Right ventricle myocardium inferior (tissue), 1 donor: ENCODE measurements at regions of chr21 and their contacts with region 1.

Region 1: GRCh38 chr21:34888569-34889319 is 160.4 kb downstream of the RUNX1 start:
- DNase-seq: peak; percentile 98
- ATAC-seq: peak; percentile 89

Region 2: GRCh38 chr21:35204850-35205541 is 316.3 kb after region 1 on chr21:
- intact Hi-C with region 1: loop called (anchors 10 kb)
- DNase-seq: peak; percentile 86
- ATAC-seq: peak; percentile 84

Region 3: DNA sequence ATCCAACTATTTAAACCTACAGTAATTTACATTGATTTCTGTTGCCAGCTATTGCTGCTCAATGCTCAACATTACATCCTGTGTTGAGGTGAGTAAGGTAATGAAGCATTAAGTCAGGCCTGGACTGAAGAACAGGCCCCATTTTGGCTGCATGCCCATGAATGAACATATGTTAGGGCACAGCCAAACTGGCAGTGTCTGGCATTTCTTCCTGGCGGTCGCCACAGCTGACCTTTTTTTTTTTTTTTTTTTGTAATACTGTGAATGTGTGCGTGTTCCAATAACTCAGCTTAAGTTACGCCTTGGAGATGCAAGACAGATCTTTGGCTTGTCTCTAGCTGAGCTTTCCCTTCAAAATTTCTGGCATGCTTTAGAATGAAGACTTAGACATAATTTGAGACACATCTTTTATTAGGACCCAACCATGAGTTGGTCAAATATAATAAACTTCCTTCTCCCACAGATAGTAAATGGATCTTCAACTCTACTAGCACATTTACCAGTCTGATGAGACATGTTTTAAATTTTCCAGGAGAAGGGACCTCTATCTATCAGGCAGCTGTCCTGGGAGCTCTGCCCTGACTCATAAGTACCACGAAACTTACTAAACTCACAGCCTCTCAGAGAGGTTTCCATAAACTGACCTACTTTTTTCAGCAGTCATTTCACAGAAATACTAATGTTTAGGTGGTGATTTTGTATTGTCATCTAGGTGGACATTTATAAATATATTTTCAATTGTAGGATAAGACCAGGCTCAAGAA is 501.5 kb after region 1 on chr21:
- intact Hi-C with region 1: loop called (anchors 10 kb)
- DNase-seq: no peak
- ATAC-seq: no peak

Region 4: GRCh38 chr21:35508139-35508888 is 619.6 kb after region 1 on chr21:
- intact Hi-C with region 1: loop called (anchors 10 kb)
- DNase-seq: peak; percentile 81
- ATAC-seq: peak; percentile 87

Region 5: DNA sequence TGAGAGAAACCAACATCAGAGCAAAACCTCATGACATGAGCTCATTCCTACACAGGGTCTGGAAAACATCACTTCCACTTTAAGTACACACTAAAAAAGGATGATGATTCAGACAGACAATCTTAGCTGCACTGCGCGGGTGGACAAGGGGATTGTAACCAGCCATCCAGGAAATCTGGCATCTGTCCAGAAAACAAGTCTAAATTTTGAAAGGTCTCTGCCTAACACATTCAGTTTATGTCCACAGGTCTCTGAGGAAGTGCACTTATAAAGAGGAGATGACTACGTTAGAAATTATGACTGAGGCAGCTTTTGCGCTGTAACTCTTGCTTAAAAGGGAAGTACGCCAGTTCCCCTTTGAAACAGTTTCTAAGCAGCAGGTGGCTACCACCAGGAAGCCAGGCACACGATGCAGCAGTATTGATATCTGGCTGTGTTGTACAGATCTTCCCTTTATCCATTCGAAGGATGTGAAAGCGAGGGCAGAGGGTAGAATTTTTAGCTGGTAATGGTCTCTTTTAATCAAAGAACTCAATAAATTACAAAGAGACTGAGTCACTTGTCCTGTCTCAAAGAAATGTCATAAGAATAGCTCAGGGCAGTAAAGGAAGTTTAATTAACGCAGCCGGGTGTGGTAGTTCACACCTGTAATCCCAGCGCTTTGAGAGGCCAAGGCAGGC is 1043.6 kb after region 1 on chr21:
- intact Hi-C with region 1: loop called (anchors 10 kb)
- DNase-seq: peak; percentile 74
- ATAC-seq: peak; percentile 77